ENCODE measurements at regions of chr19 and their contacts with region 1.

Region 1: DNA sequence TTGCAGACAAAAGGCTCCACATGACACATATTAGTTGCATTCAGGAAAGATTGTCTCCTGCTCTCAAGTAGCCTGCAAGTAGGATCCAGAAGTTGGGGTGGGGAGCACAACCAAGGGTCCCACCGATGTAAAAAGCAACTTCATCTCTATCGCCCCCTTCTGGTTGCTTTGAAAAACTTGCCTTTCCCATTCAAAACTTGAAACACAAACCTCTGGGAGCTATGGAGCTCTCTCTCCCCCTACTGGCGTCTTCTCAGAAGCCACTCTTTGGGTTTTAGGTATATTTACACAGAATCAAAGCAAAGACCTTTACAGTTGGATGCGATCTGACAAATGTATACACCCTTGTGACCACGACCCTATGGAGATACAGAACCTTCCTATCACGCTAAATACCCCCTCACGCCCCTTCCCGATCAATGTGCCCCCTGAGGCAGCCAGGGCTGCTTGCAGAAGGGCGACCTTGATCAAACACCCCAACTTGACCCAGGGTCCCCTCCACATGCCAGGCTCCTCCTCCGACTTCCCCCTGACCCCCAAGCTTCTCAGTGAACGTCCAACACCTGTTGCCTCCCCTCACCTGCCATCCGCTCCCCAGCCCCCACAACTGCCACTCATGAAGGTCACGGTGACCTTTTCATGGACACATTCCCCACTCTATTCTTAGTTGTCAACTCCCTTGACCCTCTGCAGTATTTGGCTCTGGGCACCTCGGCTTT is 10.1 kb downstream of the NOSIP start:
- DNase-seq: no peak
- H3K4me3 ChIP-seq: no peak overlapping the region
- H3K27me3 ChIP-seq: no peaks in the 10 kb centered on the region
- CTCF ChIP-seq: peak; percentile 99

Region 2: DNA sequence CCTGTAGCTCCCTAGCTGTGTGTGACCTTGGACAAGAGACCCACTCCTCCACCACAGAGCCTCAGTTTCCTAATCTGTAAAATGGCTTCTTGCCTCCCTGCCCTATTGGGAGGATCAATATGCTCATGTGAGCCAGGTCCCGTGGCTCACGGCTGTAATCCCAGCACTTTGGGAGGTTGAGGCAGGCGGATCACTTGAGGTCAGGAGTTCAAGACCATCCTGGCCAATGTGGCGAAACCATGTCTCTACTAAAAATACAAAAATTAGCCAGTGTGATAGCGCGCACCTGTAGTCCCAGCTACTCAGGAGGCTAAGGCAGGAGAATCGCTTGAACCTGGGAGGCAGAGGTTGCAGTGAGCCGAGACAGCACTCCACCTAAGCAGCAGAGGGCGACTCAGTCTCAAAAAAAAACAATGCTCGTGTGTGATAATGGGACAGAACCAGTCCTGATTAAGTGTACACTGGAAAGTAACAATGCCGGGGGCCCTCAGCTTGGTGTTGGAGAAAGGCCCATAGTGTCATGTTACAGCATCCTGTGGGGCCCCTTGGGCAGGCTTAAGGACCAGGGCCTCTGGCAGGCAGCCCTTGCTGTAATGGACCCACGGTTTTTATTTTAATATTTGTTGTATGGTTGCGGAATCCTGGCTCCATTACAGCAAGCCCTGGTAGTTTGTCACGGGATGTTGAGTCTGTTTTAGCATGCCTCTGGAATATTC is 67.3 kb before region 1 on chr19:
- CTCF ChIA-PET with region 1: interaction called, 34 read pairs
- POLR2A ChIA-PET with region 1: interaction called, 3 read pairs
- DNase-seq: peak; percentile 49
- H3K4me3 ChIP-seq: no peak overlapping the region
- H3K27me3 ChIP-seq: no peaks in the 10 kb centered on the region
- CTCF ChIP-seq: peak; percentile 68

Region 3: GRCh38 chr19:49546825-49547565 is 23.3 kb before region 1 on chr19:
- CTCF ChIA-PET with region 1: interaction called, 47 read pairs
- POLR2A ChIA-PET with region 1: no interaction called
- DNase-seq: peak; percentile 74
- H3K4me3 ChIP-seq: no peak overlapping the region
- H3K27me3 ChIP-seq: no peaks in the 10 kb centered on the region
- CTCF ChIP-seq: peak; percentile 77

Region 4: GRCh38 chr19:49580264-49581006 is 10.1 kb after region 1 on chr19 and contains the start of gene NOSIP:
- CTCF ChIA-PET with region 1: interaction called, 37 read pairs
- POLR2A ChIA-PET with region 1: no interaction called
- DNase-seq: peak; percentile 70
- H3K4me3 ChIP-seq: peak within 1 kb of the TSS; percentile 63
- H3K27me3 ChIP-seq: no peaks in the 10 kb centered on the region
- CTCF ChIP-seq: no peak
- polyA plus RNA-seq, gene NOSIP: 59.2 and 87.6 TPM in 2 replicates